ENCODE measurements at regions of chr7 and their contacts with region 1.

Region 1: DNA sequence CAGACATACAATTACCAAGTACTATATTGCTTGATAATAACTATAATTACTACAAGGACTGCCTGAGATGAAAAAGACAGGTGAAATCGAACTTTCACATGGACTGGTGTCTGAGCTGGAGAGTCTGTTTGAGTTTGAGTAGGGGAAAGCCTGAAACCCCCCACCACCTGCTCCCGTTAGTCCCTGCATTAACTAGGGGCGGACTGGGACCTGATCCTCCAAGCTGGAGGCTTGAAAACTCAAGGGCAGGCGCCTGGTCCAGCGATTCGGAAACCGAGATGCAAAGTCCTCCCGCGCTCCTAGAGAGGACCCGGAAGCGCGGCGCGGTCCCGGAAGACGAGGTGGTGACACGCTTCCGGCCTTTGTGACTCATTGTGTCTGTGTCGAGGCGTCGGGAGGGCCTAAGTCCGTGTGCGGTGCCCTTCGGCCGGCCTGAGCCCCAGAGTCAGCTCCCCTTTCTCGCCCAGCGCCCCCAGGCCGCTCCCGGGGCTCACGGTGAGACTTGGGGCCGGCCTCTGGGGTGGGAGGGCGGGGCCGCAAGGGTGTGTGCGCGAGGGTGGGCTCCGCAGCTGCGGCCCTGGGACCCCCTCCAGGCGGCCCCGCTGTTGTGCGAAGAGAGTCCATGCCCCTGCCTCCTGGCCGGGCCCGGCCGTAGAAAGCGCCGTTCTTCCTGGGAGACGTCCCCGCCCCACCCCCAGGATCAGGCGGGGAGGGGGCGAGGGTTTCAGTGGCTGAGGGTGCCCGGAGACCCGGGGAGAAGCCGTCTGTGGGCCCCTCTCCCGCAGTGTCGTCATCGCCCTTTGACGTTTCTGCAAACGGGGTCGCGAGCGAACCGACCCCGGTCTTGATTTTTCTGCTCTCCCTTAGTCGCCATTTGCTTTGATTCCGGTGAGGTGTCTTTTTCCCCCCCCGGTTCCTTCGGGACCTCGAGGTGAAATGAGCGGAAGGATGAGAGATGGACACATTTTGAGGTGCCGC is at the start of gene ZKSCAN1:
- DNase-seq: peak; percentile 88
- H3K4me3 Mint-ChIP-seq: peak within 1 kb of the TSS; percentile 95
- H3K27ac Mint-ChIP-seq: peak within 1 kb of the TSS; percentile 95
- H3K4me1 Mint-ChIP-seq: peaks cover 49% of the 10 kb centered on the region
- H3K27me3 Mint-ChIP-seq: no peaks in the 10 kb centered on the region
- total RNA-seq, gene ZKSCAN1: 63.1 to 65.5 TPM

Region 2: DNA sequence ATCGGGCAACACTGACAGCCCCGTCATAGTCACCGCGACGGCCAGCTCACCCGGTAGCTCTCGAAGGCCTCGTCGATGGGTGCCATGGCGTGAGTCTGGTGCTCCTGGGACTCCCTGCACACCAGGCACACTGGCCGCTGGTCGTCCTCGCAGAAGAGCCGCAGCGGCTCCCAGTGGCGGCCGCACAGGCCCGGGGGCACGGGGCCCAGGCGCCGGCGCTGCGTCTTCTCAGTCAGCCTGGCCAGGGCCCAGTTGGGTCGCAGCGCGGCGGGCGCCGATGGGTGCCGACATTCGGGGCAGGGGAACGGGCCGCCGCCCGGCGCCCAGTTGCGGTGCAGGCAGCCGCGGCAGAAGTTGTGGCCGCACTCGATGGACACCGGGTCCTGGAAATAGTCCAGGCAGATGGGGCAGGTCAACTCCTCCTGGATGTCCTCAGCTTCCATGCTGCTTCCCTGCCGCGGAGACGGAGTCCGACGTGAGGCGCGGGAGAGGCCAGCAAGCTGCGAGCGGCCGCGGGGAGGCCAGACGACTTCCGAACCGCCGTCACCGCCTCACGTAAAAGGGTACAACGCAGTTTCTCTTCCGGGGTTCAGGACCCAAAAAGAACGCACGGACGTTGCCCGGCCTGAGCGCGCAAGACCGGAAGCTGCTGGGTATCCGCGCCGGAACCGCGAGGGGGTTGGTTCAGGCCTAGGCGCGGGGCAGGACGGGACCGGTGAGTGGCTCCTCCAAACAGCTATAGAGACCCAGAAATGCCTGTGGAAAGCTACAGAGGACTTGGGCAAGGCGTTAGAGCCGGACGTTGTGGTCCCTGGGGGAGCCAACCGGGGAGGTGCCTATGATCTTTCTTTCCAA is 96.3 kb before region 1 on chr7 and contains the start of gene TRIM4:
- CTCF ChIA-PET with region 1: interaction called, 5 read pairs
- POLR2A ChIA-PET with region 1: interaction called, 25 read pairs
- DNase-seq: peak; percentile 93
- H3K4me3 Mint-ChIP-seq: peak within 1 kb of the TSS; percentile 96
- H3K27ac Mint-ChIP-seq: peak within 1 kb of the TSS; percentile 96
- H3K4me1 Mint-ChIP-seq: peaks cover 53% of the 10 kb centered on the region
- H3K27me3 Mint-ChIP-seq: no peaks in the 10 kb centered on the region
- total RNA-seq, gene TRIM4: 28.9 to 29.5 TPM

Region 3: DNA sequence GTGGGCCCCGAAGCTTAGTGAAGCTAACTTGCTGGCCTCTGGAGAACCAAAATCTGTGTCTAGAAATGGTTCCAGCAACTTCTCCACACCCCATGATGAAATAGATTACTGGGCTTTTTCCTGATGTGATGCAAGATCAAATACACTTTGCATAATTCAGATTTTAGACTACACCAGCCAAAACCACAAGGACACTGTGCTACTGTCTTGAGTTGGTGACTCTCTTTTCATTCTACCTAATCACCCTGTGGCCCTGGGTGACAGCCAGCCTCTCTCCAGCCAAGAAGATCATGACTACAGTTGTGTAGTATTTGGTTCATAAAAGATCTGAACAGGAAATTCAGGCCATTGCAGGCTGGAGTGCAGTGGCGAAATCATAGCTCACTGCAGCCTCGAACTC is 61.9 kb before region 1 on chr7:
- CTCF ChIA-PET with region 1: no interaction called
- POLR2A ChIA-PET with region 1: no interaction called
- DNase-seq: no peak
- H3K4me3 Mint-ChIP-seq: no peak overlapping the region
- H3K27ac Mint-ChIP-seq: no peak overlapping the region
- H3K4me1 Mint-ChIP-seq: peaks cover 12% of the 10 kb centered on the region
- H3K27me3 Mint-ChIP-seq: peaks cover 16% of the 10 kb centered on the region

Region 4: DNA sequence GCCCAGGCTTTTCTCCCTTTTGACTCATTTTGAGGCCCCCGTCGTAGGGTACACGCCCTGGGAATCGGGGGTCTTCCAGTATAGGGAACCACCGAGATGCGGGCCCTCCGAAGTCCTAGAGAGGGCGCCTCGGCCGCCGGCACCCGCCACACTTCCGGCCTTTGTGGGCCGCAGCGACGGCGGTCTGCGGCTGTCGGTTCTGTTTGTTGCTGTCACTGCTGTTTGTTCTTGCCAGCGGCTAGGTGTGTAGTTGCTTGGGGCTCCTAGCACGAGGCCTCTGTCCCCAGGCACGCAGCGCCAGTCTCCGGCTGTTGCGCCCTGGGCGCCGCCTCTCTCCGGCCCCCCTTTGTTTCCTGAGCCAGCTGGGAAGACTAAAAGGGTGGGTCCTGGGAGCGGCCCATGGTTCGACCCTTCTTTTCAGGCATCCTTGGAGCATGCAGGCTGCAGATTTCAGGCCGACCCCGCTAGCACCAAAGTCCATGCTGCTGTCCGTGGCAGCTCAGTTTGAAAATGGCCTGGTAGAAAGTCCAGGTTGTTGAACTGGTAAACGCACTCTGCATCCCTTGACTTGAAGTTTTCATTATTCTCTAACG is 17.9 kb before region 1 on chr7:
- CTCF ChIA-PET with region 1: interaction called, 13 read pairs
- POLR2A ChIA-PET with region 1: interaction called, 30 read pairs
- DNase-seq: peak; percentile 85
- H3K4me3 Mint-ChIP-seq: peak overlapping the region; percentile 60
- H3K27ac Mint-ChIP-seq: peak overlapping the region; percentile 71
- H3K4me1 Mint-ChIP-seq: peaks cover 33% of the 10 kb centered on the region
- H3K27me3 Mint-ChIP-seq: peaks cover 3% of the 10 kb centered on the region

Region 5: DNA sequence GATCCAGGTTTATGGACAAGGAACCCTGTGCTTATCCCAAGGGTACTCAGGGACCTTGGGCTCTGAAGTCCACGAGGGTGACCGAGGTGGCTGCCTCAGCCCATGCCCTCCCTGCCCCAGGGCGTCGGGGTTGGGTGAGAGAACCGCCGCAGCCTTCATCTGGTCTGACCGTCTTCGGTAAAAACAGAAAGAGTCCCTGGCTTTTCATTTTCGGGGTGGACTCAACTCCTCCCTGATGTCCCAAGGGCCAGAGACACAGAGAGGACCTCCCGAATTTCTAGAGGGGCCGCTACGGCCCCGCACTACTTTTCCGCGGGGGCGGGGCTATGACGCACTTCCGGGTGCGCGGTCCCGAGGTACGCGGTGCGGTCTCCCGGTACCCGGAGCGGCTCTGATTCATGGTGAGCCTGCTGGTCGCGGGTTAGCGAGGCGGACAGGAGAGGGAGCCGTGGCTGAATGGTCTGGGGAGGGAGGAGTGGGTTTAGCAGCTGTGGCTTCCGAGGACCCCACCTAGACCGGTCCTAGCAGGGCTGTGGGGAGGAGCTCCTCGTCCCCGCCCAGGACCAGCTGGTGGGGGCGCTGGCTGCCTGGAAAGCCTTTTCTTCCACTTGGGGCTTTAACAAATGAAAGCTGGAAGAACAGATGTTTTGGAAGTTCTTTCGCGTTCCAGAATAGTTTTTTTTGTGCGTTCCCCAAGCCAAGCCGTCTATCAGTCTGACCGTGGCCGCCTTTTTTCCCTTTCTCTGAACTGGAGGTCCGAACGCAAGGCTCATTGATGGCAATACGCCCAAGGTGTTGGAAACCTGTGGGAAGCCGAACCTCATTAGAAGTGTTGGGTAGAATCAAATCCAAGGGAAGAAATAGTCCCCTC is 34.2 kb after region 1 on chr7 and contains the start of gene ZSCAN21:
- CTCF ChIA-PET with region 1: interaction called, 8 read pairs
- POLR2A ChIA-PET with region 1: interaction called, 11 read pairs
- DNase-seq: peak; percentile 81
- H3K4me3 Mint-ChIP-seq: peak within 1 kb of the TSS; percentile 85
- H3K27ac Mint-ChIP-seq: peak within 1 kb of the TSS; percentile 80
- H3K4me1 Mint-ChIP-seq: peaks cover 17% of the 10 kb centered on the region
- H3K27me3 Mint-ChIP-seq: peaks cover 3% of the 10 kb centered on the region
- total RNA-seq, gene ZSCAN21: 6.9 TPM

Region 6: GRCh38 chr7:100081535-100082102 is 66.1 kb after region 1 on chr7 and contains the start of gene ZNF3:
- CTCF ChIA-PET with region 1: interaction called, 4 read pairs
- POLR2A ChIA-PET with region 1: interaction called, 14 read pairs
- DNase-seq: peak; percentile 98
- H3K4me3 Mint-ChIP-seq: peak within 1 kb of the TSS; percentile 81
- H3K27ac Mint-ChIP-seq: peak within 1 kb of the TSS; percentile 79
- H3K4me1 Mint-ChIP-seq: peaks cover 33% of the 10 kb centered on the region
- H3K27me3 Mint-ChIP-seq: peaks cover 3% of the 10 kb centered on the region
- total RNA-seq, gene ZNF3: 21.1 to 22.1 TPM